Psoas muscle (tissue), 8 donors: ENCODE measurements at regions of chr11 and their contacts with region 1.

Region 1: DNA sequence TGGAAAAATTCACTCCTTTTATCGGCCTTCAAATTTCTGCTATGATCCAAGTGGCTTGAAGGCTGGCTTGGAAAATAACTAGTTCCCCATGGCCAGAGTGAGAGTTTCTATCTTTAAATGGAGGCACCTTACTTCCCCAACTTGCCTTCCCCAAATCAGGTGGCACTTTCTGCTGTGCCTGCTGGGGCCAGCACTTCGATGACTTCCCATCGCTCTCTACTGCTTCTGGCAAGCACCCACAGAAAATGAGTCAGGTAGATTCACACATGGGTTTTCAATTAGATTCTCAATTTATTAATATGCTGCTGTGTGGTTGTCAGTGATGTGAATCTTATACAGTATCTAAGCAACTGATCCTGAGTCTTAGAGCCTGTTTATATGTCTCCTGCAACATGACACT is 398.8 kb upstream of the RAG2 start:
- DNase-seq: no peak
- ATAC-seq: no peak
- H3K4me3 ChIP-seq: no peak overlapping the region
- H3K27ac ChIP-seq: no peak overlapping the region
- H3K4me1 ChIP-seq: no peaks in the 10 kb centered on the region
- H3K27me3 ChIP-seq: no peaks in the 10 kb centered on the region
- CTCF ChIP-seq: no peak

Region 2: DNA sequence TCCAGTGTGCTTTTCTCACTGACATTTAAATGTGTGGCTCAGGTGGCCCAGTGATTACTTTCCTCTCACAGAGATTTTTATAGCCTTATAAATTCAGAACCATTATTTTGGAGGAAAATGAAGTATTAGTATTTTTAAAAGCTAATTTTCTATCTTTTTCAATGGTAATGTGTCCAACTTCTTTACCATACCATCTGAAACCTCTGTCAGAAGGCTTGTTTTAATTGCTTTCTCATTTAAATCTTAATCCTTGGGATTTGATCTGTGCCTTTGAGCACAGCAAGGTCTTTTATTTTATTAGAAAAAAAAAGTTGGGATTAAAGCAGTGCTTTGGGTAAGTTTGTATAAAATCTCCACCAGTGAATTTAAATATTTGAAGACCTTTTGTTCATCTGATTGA is 53.5 kb after region 1 on chr11:
- intact Hi-C with region 1: loop called in 1 of 2 experiments (anchors 10 kb)
- DNase-seq: no peak
- ATAC-seq: no peak
- H3K4me3 ChIP-seq: no peak overlapping the region
- H3K27ac ChIP-seq: no peak overlapping the region
- H3K4me1 ChIP-seq: no peaks in the 10 kb centered on the region
- H3K27me3 ChIP-seq: no peaks in the 10 kb centered on the region
- CTCF ChIP-seq: no peak